ENCODE measurements at regions of chr3 and their contacts with region 1.

Region 1: DNA sequence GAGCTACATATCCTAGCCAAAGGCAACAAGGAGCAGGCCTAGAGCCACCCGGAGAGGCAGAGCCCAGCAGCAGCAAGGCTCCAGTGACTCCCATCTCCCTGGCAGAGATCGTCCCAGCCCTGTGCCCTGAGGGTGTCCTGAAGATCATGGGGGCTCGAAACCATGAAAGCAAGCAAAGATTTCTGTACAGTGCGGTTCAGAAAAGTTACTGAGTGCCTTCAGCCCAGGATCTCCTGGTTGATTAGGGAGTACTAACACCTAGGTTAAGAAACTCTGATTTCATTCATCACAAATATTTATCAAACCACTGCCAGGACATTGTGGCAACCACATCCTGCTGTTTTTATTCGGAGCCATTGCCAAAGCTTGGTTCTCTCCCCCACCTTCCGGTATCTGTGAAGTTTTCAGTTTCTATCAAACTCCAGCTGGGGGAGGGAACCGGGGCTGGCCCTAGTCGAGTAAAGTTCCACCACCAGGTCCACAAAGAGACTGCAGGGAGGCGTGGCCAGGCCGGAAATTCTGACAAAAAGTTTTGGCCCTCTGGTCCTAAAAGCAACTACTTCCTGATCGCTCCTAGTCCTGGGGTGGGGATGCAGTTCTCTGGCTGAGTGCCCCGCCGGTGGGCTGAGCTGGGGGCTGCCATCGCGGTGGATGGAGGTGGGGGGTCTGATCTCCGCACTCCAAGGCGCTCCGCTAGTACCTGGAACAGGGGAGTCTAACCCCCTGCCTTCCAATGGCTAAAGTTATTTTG is 1.2 kb downstream of the RAB43 start:
- DNase-seq: peak; percentile 93
- H3K4me3 Mint-ChIP-seq: peak overlapping the region; percentile 94
- H3K27ac Mint-ChIP-seq: peak overlapping the region; percentile 97
- H3K4me1 Mint-ChIP-seq: peaks cover 52% of the 10 kb centered on the region
- H3K27me3 Mint-ChIP-seq: no peaks in the 10 kb centered on the region

Region 2: DNA sequence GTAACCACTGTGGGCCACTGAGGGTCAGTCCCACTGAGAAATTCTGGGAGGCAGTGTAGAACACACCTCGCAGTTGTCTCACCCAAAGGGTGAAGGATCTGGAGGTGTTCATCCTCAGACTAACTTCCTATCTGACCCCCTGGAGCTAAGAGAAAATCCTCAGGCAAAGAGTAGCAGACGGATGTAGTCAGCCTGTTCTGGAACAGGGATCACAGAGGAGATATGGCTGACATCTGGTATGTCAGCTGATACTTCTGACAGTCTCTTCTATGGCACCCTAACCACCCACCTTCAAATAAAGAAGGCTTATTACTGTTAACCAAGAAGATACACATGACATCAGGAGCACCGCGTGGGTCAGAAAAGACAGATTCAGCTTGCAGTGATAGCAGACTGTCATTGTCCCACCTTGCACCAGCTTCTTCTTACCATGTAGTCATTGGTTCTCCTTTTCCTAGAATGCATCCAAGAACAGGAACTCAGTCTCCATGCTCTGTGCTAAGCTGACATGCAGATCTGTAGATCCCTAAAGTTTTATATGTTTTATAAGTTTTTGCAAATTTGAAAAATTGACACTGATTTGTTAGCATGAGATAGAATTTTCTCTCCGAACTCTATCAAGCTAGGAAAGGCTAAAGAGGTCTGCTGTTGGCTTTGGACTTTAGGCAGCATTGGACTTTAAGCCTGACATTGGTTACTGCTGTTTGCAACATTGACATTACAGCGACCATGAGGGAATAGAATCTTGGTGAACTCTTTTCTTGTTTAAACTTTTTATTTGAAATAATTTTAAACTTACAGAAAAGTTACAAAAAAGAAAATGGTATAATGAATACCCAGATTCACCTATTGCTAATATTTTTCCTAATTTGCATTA is 1145.0 kb before region 1 on chr3:
- intact Hi-C with region 1: no loop called
- DNase-seq: no peak
- H3K4me3 Mint-ChIP-seq: no peak overlapping the region
- H3K27ac Mint-ChIP-seq: no peak overlapping the region
- H3K4me1 Mint-ChIP-seq: no peaks in the 10 kb centered on the region
- H3K27me3 Mint-ChIP-seq: peaks cover 39% of the 10 kb centered on the region

Region 3: GRCh38 chr3:128725932-128726690 is 394.3 kb before region 1 on chr3 and contains the start of gene RAB7A:
- intact Hi-C with region 1: loop called (anchors 10 kb)
- DNase-seq: peak; percentile 94
- H3K4me3 Mint-ChIP-seq: peak within 1 kb of the TSS; percentile 90
- H3K27ac Mint-ChIP-seq: peak within 1 kb of the TSS; percentile 80
- H3K4me1 Mint-ChIP-seq: peaks cover 46% of the 10 kb centered on the region
- H3K27me3 Mint-ChIP-seq: peaks cover 3% of the 10 kb centered on the region
- total RNA-seq, gene RAB7A: 320 and 322 TPM in 2 replicates

Region 4: GRCh38 chr3:128879125-128879969 is 241.1 kb before region 1 on chr3 and contains the start of gene ACAD9:
- intact Hi-C with region 1: loop called (anchors 5 kb)
- DNase-seq: peak; percentile 98
- H3K4me3 Mint-ChIP-seq: peak within 1 kb of the TSS; percentile 93
- H3K27ac Mint-ChIP-seq: peak within 1 kb of the TSS; percentile 95
- H3K4me1 Mint-ChIP-seq: peaks cover 51% of the 10 kb centered on the region
- H3K27me3 Mint-ChIP-seq: no peaks in the 10 kb centered on the region
- total RNA-seq, gene ACAD9: 60.8 and 68.9 TPM in 2 replicates

Region 5: GRCh38 chr3:128950223-128950938 is 170.0 kb before region 1 on chr3:
- intact Hi-C with region 1: no loop called
- DNase-seq: no peak
- H3K4me3 Mint-ChIP-seq: no peak overlapping the region
- H3K27ac Mint-ChIP-seq: no peak overlapping the region
- H3K4me1 Mint-ChIP-seq: no peaks in the 10 kb centered on the region
- H3K27me3 Mint-ChIP-seq: peaks cover 8% of the 10 kb centered on the region

Region 6: GRCh38 chr3:129052675-129053074 is 67.8 kb before region 1 on chr3:
- intact Hi-C with region 1: loop called (anchors 5 kb)
- DNase-seq: no peak
- H3K4me3 Mint-ChIP-seq: no peak overlapping the region
- H3K27ac Mint-ChIP-seq: no peak overlapping the region
- H3K4me1 Mint-ChIP-seq: peaks cover 6% of the 10 kb centered on the region
- H3K27me3 Mint-ChIP-seq: peaks cover 11% of the 10 kb centered on the region

Region 7: DNA sequence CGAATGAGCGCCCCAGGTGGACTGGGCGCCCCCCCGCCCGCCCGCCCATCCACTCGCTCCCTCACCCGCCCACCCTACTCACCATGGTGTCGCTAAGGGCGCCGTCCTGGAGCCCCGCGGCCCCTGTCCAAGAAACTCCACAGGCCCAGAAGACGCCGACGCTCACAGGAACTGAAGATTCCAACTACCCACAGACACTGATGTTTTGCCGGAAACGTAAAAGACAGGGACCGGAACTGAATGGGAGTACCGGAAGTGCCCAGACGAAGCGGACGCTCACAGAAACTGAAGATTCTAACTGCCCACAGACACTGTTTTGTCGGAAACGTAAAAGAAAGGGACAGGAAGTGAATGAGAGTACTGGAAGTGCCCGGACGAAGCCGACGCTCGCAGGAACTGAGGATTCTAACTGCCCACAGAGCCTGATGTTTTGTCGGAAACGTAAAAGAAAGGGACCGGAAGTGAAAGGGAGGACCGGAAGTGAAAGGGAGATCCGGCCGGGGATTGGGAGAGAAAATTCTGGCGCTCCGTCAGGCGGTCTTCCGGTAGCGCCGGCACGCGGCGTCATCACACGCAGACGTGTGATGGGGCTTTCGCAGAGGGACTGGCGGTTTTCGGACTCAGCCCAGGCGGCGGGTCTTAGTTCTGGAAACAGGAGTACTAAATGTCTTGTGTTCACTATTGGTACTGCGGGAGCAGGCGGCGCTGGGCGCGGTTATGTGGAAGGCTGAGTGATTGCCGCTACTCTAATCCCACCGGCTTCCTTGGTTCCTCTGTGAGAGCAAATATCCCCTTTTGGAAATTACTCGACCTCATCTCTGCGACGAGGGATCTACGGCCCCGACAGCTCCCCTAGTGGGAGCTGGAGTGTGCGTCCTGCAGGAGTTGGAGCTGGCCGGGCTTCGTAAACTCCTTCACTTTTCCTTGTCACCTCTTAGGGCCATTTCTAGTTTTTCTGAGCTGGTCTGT is 40.7 kb after region 1 on chr3 and contains the start of gene ISY1:
- intact Hi-C with region 1: loop called (anchors 1 kb)
- DNase-seq: peak; percentile 89
- H3K4me3 Mint-ChIP-seq: peak within 1 kb of the TSS; percentile 88
- H3K27ac Mint-ChIP-seq: peak within 1 kb of the TSS; percentile 98
- H3K4me1 Mint-ChIP-seq: peaks cover 27% of the 10 kb centered on the region
- H3K27me3 Mint-ChIP-seq: no peaks in the 10 kb centered on the region
- total RNA-seq, gene ISY1: 71.4 and 78.0 TPM in 2 replicates

Region 8: GRCh38 chr3:129238945-129239706 is 118.7 kb after region 1 on chr3:
- intact Hi-C with region 1: loop called (anchors 2 kb)
- DNase-seq: peak; percentile 53
- H3K4me3 Mint-ChIP-seq: peak overlapping the region; percentile 43
- H3K27ac Mint-ChIP-seq: peak overlapping the region; percentile 93
- H3K4me1 Mint-ChIP-seq: peaks cover 40% of the 10 kb centered on the region
- H3K27me3 Mint-ChIP-seq: no peaks in the 10 kb centered on the region

Region 9: DNA sequence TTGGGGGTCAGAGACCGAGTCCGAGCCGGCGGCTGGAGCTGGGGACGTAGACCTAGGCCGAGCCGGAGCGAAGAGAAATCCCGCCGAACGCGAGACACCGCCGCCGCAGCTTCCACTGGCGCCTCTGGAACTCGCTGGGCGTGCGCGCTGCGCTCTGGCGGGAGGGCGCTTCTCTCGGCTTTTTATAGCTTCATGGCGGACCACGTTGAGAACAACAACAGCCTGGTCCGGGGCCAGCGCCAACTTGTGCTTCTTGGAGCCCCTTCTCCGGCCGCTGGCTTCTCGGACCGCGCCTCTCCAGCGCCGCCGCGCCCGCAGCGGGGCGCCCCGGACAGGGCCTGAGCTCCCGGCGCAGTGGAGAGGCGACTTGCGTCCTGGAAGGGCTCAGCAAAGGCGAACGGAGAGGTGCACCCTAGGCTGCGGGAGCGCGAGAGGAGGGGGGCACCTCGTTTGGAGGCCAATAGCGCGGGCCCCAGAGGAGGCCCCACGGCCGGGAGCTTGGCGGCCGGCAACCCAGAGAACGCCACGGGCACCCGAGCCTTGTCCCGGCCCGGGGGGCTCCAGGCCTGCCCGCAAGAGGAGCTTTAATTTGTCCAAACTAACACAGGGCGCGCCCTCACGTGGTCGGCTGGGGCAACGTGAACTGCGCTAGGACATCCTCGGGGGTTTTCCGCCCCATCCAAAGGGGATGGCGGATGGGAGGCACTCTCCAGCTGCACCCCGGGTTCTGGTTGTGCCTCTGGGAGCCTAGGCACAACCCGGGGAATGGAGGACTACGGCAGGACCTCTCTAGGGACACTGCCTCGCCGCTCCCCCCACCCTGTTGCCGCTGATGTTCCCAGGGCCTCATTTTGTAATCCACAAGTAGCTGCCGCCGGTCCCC is 195.9 kb after region 1 on chr3:
- intact Hi-C with region 1: loop called (anchors 5 kb)
- DNase-seq: peak; percentile 89
- H3K4me3 Mint-ChIP-seq: peak overlapping the region; percentile 71
- H3K27ac Mint-ChIP-seq: peak overlapping the region; percentile 53
- H3K4me1 Mint-ChIP-seq: peaks cover 16% of the 10 kb centered on the region
- H3K27me3 Mint-ChIP-seq: no peaks in the 10 kb centered on the region

Measured in activated T-helper 2 cell treated with anti-CD3 and anti-CD28 coated beads, Interferon-gamma antibody, Interleukin-2, Interleukin-4, amounts not matched to agents 10 μg/mL and 5 μg/mL and 100 μg/mL, durations not matched to agents 14 hours and 24 hours and 36 hours (primary cell).